PC-9 (cell line): ENCODE measurements at regions of chr19 and their contacts with region 1.

Region 1: DNA sequence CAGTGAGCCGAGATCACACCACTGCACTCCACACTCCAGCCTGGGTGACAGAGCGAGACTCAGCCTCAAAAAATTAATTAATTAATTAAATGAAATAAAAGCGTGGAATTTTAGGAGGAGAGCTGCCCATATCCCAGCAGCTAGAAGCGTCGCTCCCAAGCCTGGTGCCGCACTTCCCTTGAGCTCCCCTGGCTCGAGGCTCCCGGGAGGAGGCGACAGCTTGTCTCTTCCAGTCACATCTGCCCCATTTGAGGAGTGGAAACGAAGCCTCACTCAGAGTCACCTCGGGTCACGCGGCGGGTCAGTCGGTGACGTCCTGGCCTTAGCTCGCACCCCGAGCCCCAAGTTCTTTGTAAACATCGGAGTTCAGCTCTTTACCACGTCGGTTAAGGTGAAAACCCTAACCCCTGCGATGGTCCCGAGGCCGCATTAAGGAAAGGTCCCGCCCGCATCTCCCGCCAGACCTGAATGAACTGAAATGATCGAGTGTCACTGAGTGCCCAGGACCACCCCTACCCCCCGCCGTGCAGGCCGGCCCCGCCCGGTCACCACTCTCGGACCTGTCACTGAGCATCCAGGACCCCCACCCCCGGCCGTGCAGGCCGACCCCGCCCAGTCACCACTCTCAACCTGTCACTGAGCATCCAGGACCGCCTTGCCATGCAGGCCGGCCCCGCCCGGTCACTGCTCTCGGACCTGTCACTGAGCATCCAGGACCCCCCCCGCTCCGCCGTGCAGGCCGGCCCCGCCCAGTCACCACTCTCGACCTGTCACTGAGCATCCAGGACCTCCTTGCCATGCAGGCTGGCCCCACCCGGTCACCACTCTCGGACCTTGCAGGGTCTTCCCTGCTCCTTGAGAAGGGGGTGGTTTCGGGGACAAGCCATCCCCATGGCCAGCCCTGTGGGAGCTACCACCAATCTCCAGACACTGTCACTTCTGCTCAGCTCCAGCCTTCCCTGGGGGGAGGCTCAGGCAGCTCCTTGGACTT is 176.9 kb downstream of the KDM4B start:
- DNase-seq: no peak
- H3K4me3 ChIP-seq: no peak overlapping the region
- H3K27ac ChIP-seq: no peak overlapping the region
- H3K4me1 ChIP-seq: no peaks in the 10 kb centered on the region
- H3K27me3 ChIP-seq: no peaks in the 10 kb centered on the region
- CTCF ChIP-seq: no peak

Region 2: DNA sequence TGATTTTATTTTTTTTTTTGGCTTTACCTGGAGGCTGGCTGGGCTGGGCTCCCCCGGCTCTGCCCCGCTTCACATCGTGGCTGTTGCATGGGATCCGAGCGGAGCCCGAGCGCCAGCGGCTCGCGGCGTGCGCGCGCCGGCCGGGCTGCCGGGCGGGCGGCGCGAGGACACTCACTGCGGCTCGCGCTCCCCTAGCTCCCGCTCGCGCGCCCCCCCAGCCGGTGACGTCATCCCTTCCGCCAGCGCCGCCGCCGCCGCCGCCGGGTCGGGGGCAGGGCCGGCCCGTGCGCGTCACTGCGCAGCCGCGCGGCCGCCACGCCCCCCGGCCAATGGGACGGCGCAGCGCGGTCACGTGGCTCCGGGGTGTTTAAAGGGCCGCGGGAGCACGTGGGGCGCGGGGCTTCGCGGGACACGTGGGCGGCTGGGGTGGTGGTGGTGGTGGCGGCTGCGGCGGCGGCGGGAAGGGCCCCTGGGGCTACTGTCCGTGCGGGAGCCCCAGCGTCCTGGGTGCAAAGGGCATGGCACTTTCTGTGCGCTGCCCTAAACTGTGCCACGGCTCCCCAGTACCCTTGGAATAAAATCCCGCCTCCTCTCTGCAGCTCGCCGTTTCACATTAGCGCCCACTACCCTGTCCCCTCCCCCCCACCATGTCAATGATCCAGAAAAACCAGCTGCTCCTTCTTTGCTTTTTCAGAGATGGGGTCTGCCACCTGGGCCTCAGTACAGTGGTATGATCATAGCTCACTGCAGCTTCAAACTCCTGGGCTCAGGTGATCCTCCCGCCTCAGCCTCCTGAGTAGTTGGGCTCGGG is 195.0 kb after region 1 on chr19 and contains the start of gene PTPRS:
- CTCF ChIA-PET with region 1: no interaction called
- POLR2A ChIA-PET with region 1: interaction called, 13 read pairs
- intact Hi-C with region 1: no loop called
- DNase-seq: peak in 1 of 2 experiments; percentile 86
- H3K4me3 ChIP-seq: peak within 1 kb of the TSS; percentile 69
- H3K27ac ChIP-seq: no peak within 1 kb of the TSS
- H3K4me1 ChIP-seq: peaks cover 13% of the 10 kb centered on the region
- H3K27me3 ChIP-seq: no peaks in the 10 kb centered on the region
- CTCF ChIP-seq: no peak
- total RNA-seq, gene PTPRS: 131 and 183 TPM in 2 replicates